CD4-positive, alpha-beta memory T cell (primary cell): ENCODE measurements at regions of chr21 and their contacts with region 1.

Region 1: DNA sequence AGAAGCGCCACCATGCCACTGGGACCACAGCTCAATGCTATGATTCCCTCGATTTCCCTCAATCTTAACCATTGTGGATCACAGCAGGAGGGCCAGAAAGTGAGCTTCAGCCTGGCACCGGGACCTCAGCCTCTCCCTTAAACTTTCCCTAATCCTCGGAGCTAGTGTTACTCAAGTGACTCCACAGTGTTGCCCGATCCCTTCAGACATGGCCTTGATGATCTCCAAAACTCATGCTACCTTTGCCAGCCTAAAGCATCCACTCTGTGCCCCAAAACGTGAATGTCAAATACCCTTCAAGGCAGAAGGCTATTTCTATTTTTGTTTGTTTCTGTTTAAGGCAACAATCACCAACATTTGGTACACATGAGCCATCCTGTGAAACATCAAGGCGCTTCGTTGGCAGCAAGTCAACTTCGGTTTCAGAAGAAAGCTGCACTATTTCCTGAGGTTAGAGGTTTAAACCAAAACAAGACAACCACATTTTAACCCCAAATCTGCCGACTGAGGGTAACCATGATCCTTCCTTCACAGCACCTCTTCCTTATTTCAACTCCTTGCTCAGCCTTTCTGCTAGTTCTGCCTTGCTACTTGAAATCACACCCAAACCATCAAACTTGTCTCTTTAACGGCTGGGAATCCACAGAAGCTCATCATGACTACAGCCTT is 94.4 kb upstream of the KRTAP19-8 start:
- DNase-seq: peak; percentile 83 to 93 (median 91)
- H3K4me3 ChIP-seq: peak overlapping the region in 1 of 2 donors; percentile 56
- H3K4me3 Mint-ChIP-seq: peak overlapping the region; percentile 66 to 94 (median 87)
- H3K27ac ChIP-seq: peak overlapping the region; percentile 29
- H3K27ac Mint-ChIP-seq: peak overlapping the region; percentile 85 to 95 (median 88)
- H3K4me1 ChIP-seq: peaks cover 47% of the 10 kb centered on the region
- H3K4me1 Mint-ChIP-seq: peaks cover 45 to 72% (median 53%) of the 10 kb centered on the region in 4 donors
- H3K27me3 ChIP-seq: no peaks in the 10 kb centered on the region
- H3K27me3 Mint-ChIP-seq: peaks cover 0 to 1% of the 10 kb centered on the region in 2 donors

Region 2: DNA sequence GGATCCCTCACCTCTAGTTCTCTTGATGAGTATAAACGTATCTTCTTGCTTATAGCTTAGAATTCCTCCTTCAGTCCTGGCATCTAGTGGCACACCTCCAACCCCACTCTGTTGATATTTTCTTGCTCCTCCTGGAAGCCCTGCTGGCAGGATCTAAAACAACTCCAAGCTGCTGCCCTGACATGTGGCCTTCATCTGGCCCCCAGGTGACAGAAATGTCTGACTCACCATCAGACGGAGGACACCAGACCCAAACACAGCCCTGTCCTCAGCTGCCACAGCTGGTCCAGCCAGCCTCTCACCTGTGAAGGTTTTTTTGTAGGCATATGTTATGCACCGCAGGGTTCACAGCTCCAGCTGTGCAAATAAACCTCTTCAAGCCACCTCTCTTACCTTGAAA is 147.8 kb before region 1 on chr21:
- CTCF ChIA-PET with region 1: no interaction called
- POLR2A ChIA-PET with region 1: no interaction called
- intact Hi-C with region 1: no loop called
- DNase-seq: no peak
- H3K4me3 ChIP-seq: no peak overlapping the region
- H3K4me3 Mint-ChIP-seq: no peak overlapping the region
- H3K27ac ChIP-seq: no peak overlapping the region
- H3K27ac Mint-ChIP-seq: no peak overlapping the region
- H3K4me1 ChIP-seq: no peaks in the 10 kb centered on the region
- H3K4me1 Mint-ChIP-seq: peaks cover 0 to 3% (median 2%) of the 10 kb centered on the region in 4 donors
- H3K27me3 ChIP-seq: no peaks in the 10 kb centered on the region
- H3K27me3 Mint-ChIP-seq: no peaks in the 10 kb centered on the region

Region 3: GRCh38 chr21:31107871-31108270 is 24.8 kb before region 1 on chr21:
- CTCF ChIA-PET with region 1: interaction called, 12 read pairs
- POLR2A ChIA-PET with region 1: interaction called, 5 read pairs
- intact Hi-C with region 1: no loop called
- DNase-seq: no peak
- H3K4me3 ChIP-seq: no peak overlapping the region
- H3K4me3 Mint-ChIP-seq: no peak overlapping the region
- H3K27ac ChIP-seq: no peak overlapping the region
- H3K27ac Mint-ChIP-seq: no peak overlapping the region
- H3K4me1 ChIP-seq: peaks cover 12% of the 10 kb centered on the region
- H3K4me1 Mint-ChIP-seq: peaks cover 13 to 21% (median 16%) of the 10 kb centered on the region in 4 donors
- H3K27me3 ChIP-seq: no peaks in the 10 kb centered on the region
- H3K27me3 Mint-ChIP-seq: no peaks in the 10 kb centered on the region

Region 4: DNA sequence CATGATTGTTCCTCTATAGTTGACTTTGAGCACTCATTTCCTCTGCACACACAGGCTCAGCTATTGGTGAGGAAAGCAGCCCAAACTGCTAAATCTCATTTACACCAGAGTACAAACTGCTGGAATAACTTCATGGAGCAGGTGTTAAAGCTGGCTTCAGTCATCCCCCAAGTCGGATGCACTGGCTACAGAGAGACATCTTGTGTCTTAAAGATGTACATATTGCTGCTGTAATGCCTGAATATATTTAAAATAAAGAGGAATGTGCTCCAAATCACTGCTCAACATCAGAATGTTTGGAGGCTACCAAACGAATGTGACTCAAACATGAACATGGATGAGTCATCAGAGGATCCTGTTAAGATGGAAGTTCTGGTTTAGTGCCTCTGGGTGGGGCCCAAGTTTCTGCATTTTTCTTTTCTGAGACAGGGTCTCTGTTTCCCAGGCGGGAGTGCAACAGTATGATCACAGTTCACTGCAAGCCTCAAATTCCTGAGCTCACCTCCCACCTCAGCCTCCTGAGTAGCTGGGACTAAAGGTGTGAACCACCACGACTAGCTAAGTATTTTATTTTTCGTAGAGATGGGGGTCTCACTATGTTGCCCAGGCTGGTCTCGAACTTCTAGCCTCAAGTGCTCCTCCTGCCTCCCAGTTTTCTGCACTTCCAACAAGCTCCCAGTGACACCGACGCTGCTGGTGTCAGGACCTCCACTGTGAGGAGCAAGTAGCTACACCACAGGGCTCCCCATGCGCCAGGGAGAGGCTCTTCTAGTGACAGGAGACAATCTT is 15.4 kb before region 1 on chr21:
- CTCF ChIA-PET with region 1: interaction called, 3 read pairs
- POLR2A ChIA-PET with region 1: interaction called, 3 read pairs
- intact Hi-C with region 1: loop called (anchors 2 kb)
- DNase-seq: no peak
- H3K4me3 ChIP-seq: no peak overlapping the region
- H3K4me3 Mint-ChIP-seq: no peak overlapping the region
- H3K27ac ChIP-seq: no peak overlapping the region
- H3K27ac Mint-ChIP-seq: no peak overlapping the region
- H3K4me1 ChIP-seq: no peaks in the 10 kb centered on the region
- H3K4me1 Mint-ChIP-seq: peaks cover 0 to 13% (median 4%) of the 10 kb centered on the region in 4 donors
- H3K27me3 ChIP-seq: no peaks in the 10 kb centered on the region
- H3K27me3 Mint-ChIP-seq: no peaks in the 10 kb centered on the region

Region 5: DNA sequence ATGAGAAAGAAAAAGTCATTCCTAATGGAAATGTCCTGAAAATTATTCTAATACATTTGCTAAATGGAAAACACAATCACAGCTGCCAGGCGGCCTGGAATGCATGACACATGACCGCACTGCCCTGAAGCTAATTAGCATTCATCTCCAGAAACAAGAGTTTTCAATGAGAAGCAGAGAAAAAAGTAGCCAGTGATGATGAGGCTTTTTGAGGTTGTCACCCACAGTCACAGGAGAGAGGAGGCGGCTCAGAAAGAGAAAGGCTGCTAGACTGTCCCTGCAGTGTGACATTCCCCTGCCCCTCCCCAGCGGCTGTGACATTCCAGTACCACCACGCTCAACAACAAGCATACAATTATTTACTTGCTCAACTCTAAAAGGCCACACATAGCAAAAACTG is 28.4 kb after region 1 on chr21:
- CTCF ChIA-PET with region 1: interaction called, 4 read pairs
- POLR2A ChIA-PET with region 1: interaction called, 18 read pairs
- intact Hi-C with region 1: loop called (anchors 2 kb)
- DNase-seq: no peak
- H3K4me3 ChIP-seq: no peak overlapping the region
- H3K4me3 Mint-ChIP-seq: peak overlapping the region; percentile 56 to 84 (median 72)
- H3K27ac ChIP-seq: no peak overlapping the region
- H3K27ac Mint-ChIP-seq: peak overlapping the region; percentile 73 to 96 (median 86)
- H3K4me1 ChIP-seq: peaks cover 87% of the 10 kb centered on the region
- H3K4me1 Mint-ChIP-seq: peaks cover 48 to 82% (median 70%) of the 10 kb centered on the region in 4 donors
- H3K27me3 ChIP-seq: no peaks in the 10 kb centered on the region
- H3K27me3 Mint-ChIP-seq: no peaks in the 10 kb centered on the region

Region 6: GRCh38 chr21:31173881-31174555 is 41.3 kb after region 1 on chr21:
- CTCF ChIA-PET with region 1: interaction called, 7 read pairs
- POLR2A ChIA-PET with region 1: interaction called, 14 read pairs
- intact Hi-C with region 1: no loop called
- DNase-seq: peak in 3 of 5 donors; percentile 27 to 70 (median 44)
- H3K4me3 ChIP-seq: no peak overlapping the region
- H3K4me3 Mint-ChIP-seq: peak overlapping the region; percentile 66 to 88 (median 80)
- H3K27ac ChIP-seq: peak overlapping the region; percentile 38
- H3K27ac Mint-ChIP-seq: peak overlapping the region; percentile 81 to 93 (median 90)
- H3K4me1 ChIP-seq: peaks cover 90% of the 10 kb centered on the region
- H3K4me1 Mint-ChIP-seq: peaks cover 55 to 96% (median 79%) of the 10 kb centered on the region in 4 donors
- H3K27me3 ChIP-seq: no peaks in the 10 kb centered on the region
- H3K27me3 Mint-ChIP-seq: no peaks in the 10 kb centered on the region

Region 7: DNA sequence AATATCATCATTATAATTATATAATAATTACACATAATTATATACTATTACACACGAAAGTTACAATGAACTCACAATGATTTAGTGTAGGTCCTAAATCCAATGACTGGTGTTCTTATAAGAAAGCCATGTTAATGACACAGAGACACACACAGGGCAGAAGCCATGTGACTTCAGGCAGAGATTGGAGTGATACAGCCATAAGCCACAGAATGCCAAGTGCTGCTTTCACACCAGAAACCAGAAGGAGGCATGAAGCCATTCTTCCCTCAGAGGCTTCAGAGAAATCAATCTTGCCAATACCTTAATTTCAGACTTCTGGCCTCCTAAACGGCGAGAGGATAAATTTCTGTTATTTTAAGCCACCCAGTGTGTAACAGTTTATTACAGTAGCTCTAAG is 53.0 kb after region 1 on chr21:
- CTCF ChIA-PET with region 1: interaction called, 33 read pairs
- POLR2A ChIA-PET with region 1: interaction called, 39 read pairs
- intact Hi-C with region 1: loop called (anchors 1 kb)
- DNase-seq: peak in 3 of 5 donors; percentile 24 to 68 (median 27)
- H3K4me3 ChIP-seq: peak overlapping the region; percentile 70 to 85
- H3K4me3 Mint-ChIP-seq: peak overlapping the region; percentile 85 to 94 (median 90)
- H3K27ac ChIP-seq: peak overlapping the region; percentile 62
- H3K27ac Mint-ChIP-seq: peak overlapping the region; percentile 70 to 94 (median 92)
- H3K4me1 ChIP-seq: peaks cover 88% of the 10 kb centered on the region
- H3K4me1 Mint-ChIP-seq: peaks cover 58 to 84% (median 70%) of the 10 kb centered on the region in 4 donors
- H3K27me3 ChIP-seq: no peaks in the 10 kb centered on the region
- H3K27me3 Mint-ChIP-seq: no peaks in the 10 kb centered on the region

Region 8: DNA sequence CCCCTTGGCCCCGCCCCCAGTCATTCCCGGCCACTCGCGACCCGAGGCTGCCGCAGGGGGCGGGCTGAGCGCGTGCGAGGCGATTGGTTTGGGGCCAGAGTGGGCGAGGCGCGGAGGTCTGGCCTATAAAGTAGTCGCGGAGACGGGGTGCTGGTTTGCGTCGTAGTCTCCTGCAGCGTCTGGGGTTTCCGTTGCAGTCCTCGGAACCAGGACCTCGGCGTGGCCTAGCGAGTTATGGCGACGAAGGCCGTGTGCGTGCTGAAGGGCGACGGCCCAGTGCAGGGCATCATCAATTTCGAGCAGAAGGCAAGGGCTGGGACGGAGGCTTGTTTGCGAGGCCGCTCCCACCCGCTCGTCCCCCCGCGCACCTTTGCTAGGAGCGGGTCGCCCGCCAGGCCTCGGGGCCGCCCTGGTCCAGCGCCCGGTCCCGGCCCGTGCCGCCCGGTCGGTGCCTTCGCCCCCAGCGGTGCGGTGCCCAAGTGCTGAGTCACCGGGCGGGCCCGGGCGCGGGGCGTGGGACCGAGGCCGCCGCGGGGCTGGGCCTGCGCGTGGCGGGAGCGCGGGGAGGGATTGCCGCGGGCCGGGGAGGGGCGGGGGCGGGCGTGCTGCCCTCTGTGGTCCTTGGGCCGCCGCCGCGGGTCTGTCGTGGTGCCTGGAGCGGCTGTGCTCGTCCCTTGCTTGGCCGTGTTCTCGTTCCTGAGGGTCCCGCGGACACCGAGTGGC is 527.0 kb after region 1 on chr21 and contains the start of gene SOD1:
- CTCF ChIA-PET with region 1: no interaction called
- POLR2A ChIA-PET with region 1: no interaction called
- intact Hi-C with region 1: loop called (anchors 2 kb)
- DNase-seq: peak; percentile 95 to 97 (median 96)
- H3K4me3 ChIP-seq: peak within 1 kb of the TSS; percentile 70 to 79
- H3K4me3 Mint-ChIP-seq: peak within 1 kb of the TSS; percentile 98 to 100 (median 100)
- H3K27ac ChIP-seq: peak within 1 kb of the TSS; percentile 77
- H3K27ac Mint-ChIP-seq: peak within 1 kb of the TSS; percentile 81 to 100 (median 99)
- H3K4me1 ChIP-seq: peaks cover 64% of the 10 kb centered on the region
- H3K4me1 Mint-ChIP-seq: peaks cover 43 to 80% (median 60%) of the 10 kb centered on the region in 4 donors
- H3K27me3 ChIP-seq: no peaks in the 10 kb centered on the region
- H3K27me3 Mint-ChIP-seq: no peaks in the 10 kb centered on the region
- total RNA-seq, gene SOD1: 178 to 198 TPM